ENCODE measurements at regions of chr2 and their contacts with region 1.

Region 1: DNA sequence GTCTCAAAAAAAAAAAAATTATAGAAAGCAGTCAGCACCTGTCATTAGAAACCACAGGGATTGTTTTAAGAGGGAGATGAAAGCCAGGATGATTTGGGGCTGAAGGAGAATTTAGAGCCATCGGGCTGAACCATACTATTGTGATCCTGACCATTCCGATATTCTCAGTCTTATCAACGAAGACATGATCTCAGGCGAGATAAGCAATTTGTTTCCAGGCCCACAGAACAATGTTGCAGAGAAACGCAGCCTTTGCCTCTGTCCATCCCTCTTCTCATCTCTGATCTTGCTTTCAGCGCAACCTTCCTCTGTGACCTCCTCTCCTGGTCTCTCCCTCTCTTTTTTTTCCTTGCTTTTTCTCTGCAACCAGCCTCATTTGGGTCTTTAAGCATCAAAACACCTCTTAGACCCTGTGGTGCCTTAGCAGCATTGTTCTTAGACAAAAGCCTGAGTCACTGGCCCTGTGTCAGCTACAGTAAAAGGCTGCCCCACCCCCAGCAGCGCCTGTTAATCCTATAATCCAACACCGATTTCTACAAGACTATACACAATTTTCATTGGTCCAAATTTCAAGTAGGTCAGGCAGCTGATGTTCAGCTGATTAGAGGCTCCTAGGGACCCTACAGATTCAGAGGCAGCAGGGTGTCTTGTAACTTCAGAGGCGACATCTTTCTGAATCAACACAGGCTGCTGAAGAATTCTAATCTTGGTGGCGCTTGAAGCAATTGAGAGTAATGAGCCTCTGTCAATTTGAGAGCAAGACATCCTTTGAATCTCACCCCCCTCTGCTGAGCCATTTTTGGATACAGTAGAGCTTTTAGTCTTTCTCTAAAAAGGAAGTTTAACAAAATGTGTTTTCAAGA is 206.0 kb downstream of the NCK2 start:
- DNase-seq: peak in 1 of 9 donors; percentile 24
- ATAC-seq: no peak
- H3K4me3 ChIP-seq: no peak overlapping the region
- H3K4me3 Mint-ChIP-seq: peak overlapping the region in 9 of 10 donors; percentile 1 to 70 (median 39)
- H3K27ac ChIP-seq: no peak overlapping the region
- H3K27ac Mint-ChIP-seq: peak overlapping the region in 7 of 9 donors; percentile 26 to 87 (median 56)
- H3K4me1 ChIP-seq: peaks cover 5 to 46% of the 10 kb centered on the region in 2 donors
- H3K4me1 Mint-ChIP-seq: peaks cover 30 to 80% (median 71%) of the 10 kb centered on the region in 7 donors
- H3K27me3 ChIP-seq: no peaks in the 10 kb centered on the region
- H3K27me3 Mint-ChIP-seq: peaks cover 0 to 8% (median 0%) of the 10 kb centered on the region in 5 donors

Region 2: DNA sequence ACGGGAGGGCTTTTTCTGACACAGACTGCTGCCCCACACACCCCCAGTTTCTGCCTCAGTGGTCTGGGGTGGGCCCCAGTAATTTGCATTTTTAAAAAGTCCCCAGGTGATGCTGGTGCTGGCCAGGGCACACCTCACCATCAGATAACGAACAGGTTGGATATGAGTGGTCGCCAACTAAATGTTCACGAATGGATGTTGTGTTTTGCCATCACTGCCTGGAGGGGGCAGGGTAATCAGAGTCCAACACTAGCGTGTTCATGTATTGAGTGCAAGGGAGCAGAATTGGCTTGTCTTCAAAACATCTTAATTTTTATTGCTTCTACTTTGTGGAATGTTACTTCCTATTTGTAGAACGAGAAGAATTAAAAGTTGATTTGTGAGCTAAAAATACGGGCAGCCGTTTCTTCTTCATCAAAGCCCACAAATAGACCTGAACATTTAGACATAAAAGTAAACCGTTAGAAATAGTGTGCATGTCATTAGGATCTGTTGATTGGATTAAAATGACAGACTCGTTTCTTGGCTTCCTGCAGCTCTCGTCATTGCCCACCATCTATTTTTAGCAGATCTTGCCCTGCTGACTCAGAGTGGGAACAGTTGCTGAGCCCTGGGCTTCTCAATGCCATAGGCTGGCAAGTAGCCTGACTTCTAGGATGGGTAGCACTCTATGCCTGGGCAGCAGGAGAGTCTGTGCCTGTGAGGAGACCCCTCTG is 160.8 kb before region 1 on chr2:
- CTCF ChIA-PET with region 1: no interaction called
- POLR2A ChIA-PET with region 1: no interaction called
- intact Hi-C with region 1: loop called in 1 of 2 experiments (anchors 5 kb)
- DNase-seq: peak in 6 of 9 donors; percentile 38 to 78 (median 53)
- ATAC-seq: peak; percentile 79
- H3K4me3 ChIP-seq: peak overlapping the region; percentile 38
- H3K4me3 Mint-ChIP-seq: peak overlapping the region; percentile 52 to 89 (median 72)
- H3K27ac ChIP-seq: peak overlapping the region; percentile 63
- H3K27ac Mint-ChIP-seq: peak overlapping the region; percentile 81 to 99 (median 92)
- H3K4me1 ChIP-seq: peaks cover 86 to 92% of the 10 kb centered on the region in 2 donors
- H3K4me1 Mint-ChIP-seq: peaks cover 62 to 100% (median 94%) of the 10 kb centered on the region in 7 donors
- H3K27me3 ChIP-seq: no peaks in the 10 kb centered on the region
- H3K27me3 Mint-ChIP-seq: no peaks in the 10 kb centered on the region

Region 3: DNA sequence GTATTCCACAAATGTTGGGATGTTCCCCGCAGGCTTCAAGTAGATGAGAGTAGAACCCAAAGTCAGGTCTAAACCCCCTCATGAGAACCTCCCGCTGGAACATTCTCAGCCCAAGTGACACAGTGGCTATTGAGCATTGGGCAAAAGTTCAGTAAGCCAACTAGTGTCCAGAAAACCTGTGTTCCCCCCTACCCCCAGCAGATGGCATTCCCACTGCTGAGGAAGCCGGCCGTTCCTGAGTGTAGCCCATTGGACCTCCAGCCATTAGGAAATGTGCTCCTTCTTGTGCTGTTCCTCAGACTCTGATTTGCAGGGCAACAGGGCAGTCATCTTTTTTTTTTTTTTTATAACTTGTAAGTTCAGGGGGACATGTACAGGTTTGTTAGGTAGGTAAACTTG is 54.0 kb before region 1 on chr2:
- CTCF ChIA-PET with region 1: no interaction called
- POLR2A ChIA-PET with region 1: interaction called, 3 read pairs
- intact Hi-C with region 1: loop called in 1 of 2 experiments (anchors 5 kb)
- DNase-seq: no peak
- ATAC-seq: no peak
- H3K4me3 ChIP-seq: no peak overlapping the region
- H3K4me3 Mint-ChIP-seq: peak overlapping the region in 2 of 10 donors; percentile 13 to 52
- H3K27ac ChIP-seq: no peak overlapping the region
- H3K27ac Mint-ChIP-seq: peak overlapping the region in 7 of 9 donors; percentile 83 to 92 (median 88)
- H3K4me1 ChIP-seq: peaks cover 11 to 20% of the 10 kb centered on the region in 2 donors
- H3K4me1 Mint-ChIP-seq: peaks cover 17 to 80% (median 60%) of the 10 kb centered on the region in 7 donors
- H3K27me3 ChIP-seq: no peaks in the 10 kb centered on the region
- H3K27me3 Mint-ChIP-seq: no peaks in the 10 kb centered on the region